SK-N-SH (cell line): ENCODE measurements at regions of chr12 and their contacts with region 1.

Region 1: GRCh38 chr12:5442251-5443006 is 10.5 kb downstream of the NTF3 start:
- DNase-seq: peak; percentile 55
- H3K4me3 ChIP-seq: no peak overlapping the region
- H3K27ac ChIP-seq: no peak overlapping the region
- H3K4me1 ChIP-seq: no peaks in the 10 kb centered on the region; a peak in 1 of 4 replicates
- H3K27me3 ChIP-seq: peaks cover 96% of the 10 kb centered on the region
- CTCF ChIP-seq: peak; percentile 76
- EP300 ChIP-seq: no peak
- RAD21 ChIP-seq: peak; percentile 86

Region 2: DNA sequence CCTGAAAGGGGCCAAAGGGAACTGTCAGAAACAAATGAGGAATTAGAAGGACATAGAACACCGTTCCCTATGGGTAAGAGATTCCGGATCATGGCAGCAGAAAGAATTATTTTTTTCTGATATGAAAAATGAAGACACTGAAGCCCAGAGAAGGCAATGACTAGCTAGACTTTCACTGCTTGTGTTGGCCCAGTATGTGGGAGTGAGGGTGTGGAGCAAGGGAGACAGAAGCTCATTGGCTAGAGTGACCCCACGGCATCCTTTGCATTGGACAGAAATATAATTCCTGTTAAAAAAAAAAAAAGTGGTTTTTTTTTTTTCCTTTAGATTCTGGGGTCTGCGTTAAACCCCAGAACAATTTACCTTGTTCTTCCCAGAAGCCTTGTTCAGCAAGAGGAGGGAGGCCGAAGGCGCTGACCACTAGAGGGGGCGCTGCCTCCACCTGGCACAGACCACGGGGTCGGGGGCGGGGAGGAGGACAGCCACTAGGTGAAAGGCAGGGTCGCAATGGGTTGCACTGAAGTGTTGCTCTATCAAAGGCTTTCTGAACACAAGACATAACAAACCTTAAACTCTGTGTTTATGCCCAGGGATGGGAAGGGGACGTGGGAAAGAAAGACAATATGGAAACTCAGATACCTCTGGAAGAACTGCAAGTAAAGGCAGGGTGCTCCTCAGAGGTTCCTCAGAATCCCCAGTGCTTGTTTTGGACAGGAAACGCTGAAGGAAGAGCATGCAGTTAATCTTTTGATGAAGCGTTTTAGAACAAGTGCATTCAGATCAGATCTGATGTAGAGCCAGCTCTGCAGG is 241.9 kb before region 1 on chr12:
- CTCF ChIA-PET with region 1: interaction called, 17 read pairs
- POLR2A ChIA-PET with region 1: no interaction called
- DNase-seq: peak; percentile 64
- H3K4me3 ChIP-seq: no peak overlapping the region; a peak in 1 of 4 replicates
- H3K27ac ChIP-seq: no peak overlapping the region
- H3K4me1 ChIP-seq: peaks cover 0 to 7% of the 10 kb centered on the region in 2 experiments; a peak in 1 of 4 replicates
- H3K27me3 ChIP-seq: no peaks in the 10 kb centered on the region
- CTCF ChIP-seq: peak; percentile 64
- EP300 ChIP-seq: no peak
- RAD21 ChIP-seq: peak; percentile 67

Region 3: GRCh38 chr12:5856692-5857091 is 414.3 kb after region 1 on chr12:
- CTCF ChIA-PET with region 1: no interaction called
- POLR2A ChIA-PET with region 1: no interaction called
- DNase-seq: no peak
- H3K4me3 ChIP-seq: no peak overlapping the region
- H3K27ac ChIP-seq: no peak overlapping the region
- H3K4me1 ChIP-seq: no peaks in the 10 kb centered on the region
- H3K27me3 ChIP-seq: peaks cover 21% of the 10 kb centered on the region; the same call in 1 of the 2 replicates
- CTCF ChIP-seq: no peak
- EP300 ChIP-seq: no peak
- RAD21 ChIP-seq: no peak